ENCODE measurements at regions of chr18 and their contacts with region 1.

Region 1: DNA sequence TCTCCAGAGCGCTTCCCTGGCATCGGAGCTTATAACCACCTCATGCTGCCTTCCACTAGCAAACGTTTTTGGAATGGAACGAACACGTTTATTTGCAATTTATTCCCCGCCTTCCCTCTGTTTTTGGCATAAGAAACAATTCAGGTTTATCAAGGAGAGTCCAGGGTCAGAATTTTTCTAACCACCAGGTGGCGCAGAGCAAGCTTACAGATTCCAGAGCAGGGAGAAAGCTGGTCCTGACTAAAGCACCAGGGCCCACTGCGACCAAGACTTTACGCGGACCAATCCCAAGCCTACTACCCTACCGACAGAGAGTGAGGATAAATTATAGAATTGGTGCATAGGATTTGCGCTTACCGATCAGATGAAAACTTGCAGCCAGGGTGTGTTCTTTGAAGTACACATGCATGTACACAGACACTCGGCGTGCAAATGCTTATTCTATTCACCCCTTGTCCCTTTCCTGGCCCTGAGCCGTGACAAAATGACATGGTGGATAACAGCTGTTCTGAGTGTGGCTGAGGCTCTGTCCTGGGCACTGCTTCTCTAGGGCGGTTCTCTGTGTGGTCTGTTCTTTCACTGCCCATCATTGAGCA is 34.7 kb downstream of the NAPG start:
- DNase-seq: peak; percentile 75
- CTCF ChIP-seq: peak; percentile 66

Region 2: GRCh38 chr18:10261302-10262276 is 299.0 kb before region 1 on chr18:
- CTCF ChIA-PET with region 1: no interaction called
- POLR2A ChIA-PET with region 1: no interaction called
- DNase-seq: no peak
- CTCF ChIP-seq: no peak

Region 3: GRCh38 chr18:10536280-10536679 is 24.3 kb before region 1 on chr18:
- CTCF ChIA-PET with region 1: interaction called, 28 read pairs
- POLR2A ChIA-PET with region 1: no interaction called
- DNase-seq: no peak
- CTCF ChIP-seq: no peak

Region 4: DNA sequence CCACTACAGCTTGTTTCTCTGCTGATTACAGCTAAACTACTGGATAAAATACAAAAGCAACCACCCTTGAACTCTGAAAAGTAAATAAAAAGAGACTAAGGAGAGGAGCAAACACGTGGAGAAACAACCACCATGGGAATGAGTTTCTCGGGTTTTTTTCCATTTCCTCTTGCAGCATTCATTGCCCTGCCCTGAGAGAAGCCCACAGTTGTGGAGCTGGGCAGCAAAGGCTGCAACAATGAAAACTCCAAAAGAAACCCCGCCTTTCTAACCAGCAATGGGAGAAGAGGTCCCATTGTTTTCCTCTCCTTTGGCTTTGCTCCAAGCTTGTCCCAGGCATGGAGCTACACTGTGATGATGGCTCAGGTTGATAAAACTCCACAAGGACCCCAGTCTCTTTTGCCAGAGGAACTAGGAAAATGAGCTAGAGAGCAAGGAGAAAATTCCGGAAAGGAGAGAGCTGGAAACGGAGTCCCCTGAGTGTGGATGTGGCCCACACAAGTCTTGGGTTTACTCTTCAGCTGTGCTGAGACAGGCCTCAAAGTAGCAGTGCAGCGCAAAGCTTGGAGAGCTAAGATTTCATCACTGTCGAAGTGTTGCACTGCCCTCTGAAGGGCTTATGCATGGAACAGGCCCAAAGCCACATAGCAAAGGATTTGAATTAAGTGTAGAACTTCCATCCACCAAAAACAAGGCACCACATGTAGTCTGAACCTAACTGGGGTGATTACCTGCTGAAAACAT is 13.8 kb before region 1 on chr18:
- CTCF ChIA-PET with region 1: interaction called, 87 read pairs
- POLR2A ChIA-PET with region 1: no interaction called
- DNase-seq: no peak
- CTCF ChIP-seq: no peak

Region 5: DNA sequence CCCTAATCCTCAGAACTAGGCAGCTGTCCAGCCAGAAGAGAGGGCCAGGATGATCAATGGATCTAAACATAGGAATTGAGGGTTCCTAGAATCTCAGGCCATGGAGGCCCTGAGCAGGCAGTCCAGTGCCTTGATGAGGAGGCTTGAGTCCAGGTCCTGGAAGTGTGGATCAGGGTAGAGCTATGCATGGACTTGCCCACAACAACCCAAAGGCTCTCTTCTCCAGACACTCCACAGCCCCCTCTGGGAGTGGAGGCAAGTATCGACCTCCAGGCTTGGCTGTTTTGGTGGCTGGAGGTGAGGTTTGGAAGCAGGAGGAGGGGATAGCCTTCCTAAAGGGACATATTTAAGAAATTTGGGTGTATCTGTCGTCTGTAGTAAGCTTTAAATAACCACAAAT is 11.0 kb after region 1 on chr18:
- CTCF ChIA-PET with region 1: interaction called, 14 read pairs
- POLR2A ChIA-PET with region 1: no interaction called
- DNase-seq: no peak
- CTCF ChIP-seq: no peak

Region 6: GRCh38 chr18:10670856-10671255 is 110.3 kb after region 1 on chr18:
- CTCF ChIA-PET with region 1: interaction called, 10 read pairs
- POLR2A ChIA-PET with region 1: no interaction called
- DNase-seq: no peak
- CTCF ChIP-seq: peak; percentile 10

Region 7: GRCh38 chr18:11149441-11150270 is 589.1 kb after region 1 on chr18 and contains the start of gene PIEZO2:
- CTCF ChIA-PET with region 1: interaction called, 56 read pairs
- POLR2A ChIA-PET with region 1: no interaction called
- DNase-seq: peak; percentile 92
- CTCF ChIP-seq: no peak

Measured in GM10248 (cell line).